Activated naive CD4-positive, alpha-beta T cell treated with anti-CD3 and anti-CD28 coated beads for 36 hours (primary cell): ENCODE measurements at regions of chr1 and their contacts with region 1.

Region 1: DNA sequence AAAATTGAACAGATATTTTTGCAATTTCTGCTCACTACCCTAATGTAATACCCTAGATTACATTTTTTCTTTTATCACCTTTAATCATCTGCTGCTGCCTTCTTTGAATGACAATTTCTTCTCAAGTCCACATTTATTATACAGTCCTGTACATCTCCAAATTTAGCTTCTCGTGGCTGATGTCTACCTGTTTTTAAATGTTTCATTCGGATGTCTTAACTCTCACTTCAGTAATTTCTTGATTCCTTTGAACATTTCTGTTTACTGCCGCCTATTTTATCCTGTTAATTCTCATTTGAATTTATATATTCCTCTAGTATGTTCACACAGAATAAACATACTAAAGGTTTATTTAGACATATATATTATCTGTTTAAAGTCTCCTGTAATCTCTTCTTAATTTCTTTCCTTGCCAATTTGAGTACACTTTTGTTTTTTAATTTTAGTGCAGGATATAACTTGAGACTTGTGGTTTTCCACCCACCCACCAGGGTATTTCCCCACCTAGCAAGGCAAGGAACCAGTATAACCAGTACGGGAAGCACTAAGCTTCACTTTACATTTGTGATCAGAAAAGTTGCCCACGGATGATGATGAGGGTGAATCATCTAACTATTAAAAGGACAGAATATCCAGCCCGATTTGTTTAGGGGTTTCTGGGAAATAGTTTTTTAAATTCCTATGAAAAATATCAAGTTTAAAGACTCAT is 12.7 kb downstream of the INSL5 start:
- DNase-seq: peak; percentile 81
- H3K4me3 Mint-ChIP-seq: peak overlapping the region; percentile 51
- H3K27ac Mint-ChIP-seq: peak overlapping the region; percentile 50
- H3K4me1 Mint-ChIP-seq: peaks cover 30% of the 10 kb centered on the region
- H3K27me3 Mint-ChIP-seq: no peaks in the 10 kb centered on the region

Region 2: GRCh38 chr1:66732407-66733166 is 55.8 kb before region 1 on chr1:
- CTCF ChIA-PET with region 1: no interaction called
- intact Hi-C with region 1: loop called (anchors 2 kb)
- DNase-seq: no peak
- H3K4me3 Mint-ChIP-seq: no peak overlapping the region
- H3K27ac Mint-ChIP-seq: no peak overlapping the region
- H3K4me1 Mint-ChIP-seq: peaks cover 23% of the 10 kb centered on the region
- H3K27me3 Mint-ChIP-seq: no peaks in the 10 kb centered on the region

Region 3: GRCh38 chr1:66924756-66925557 is 136.6 kb after region 1 on chr1 and contains the starts of genes DNAI4 and MIER1:
- CTCF ChIA-PET with region 1: interaction called, 4 read pairs
- intact Hi-C with region 1: loop called (anchors 1 kb)
- DNase-seq: peak; percentile 98
- H3K4me3 Mint-ChIP-seq: peak within 1 kb of the TSS; percentile 92
- H3K27ac Mint-ChIP-seq: peak within 1 kb of the TSS; percentile 95
- H3K4me1 Mint-ChIP-seq: peaks cover 50% of the 10 kb centered on the region
- H3K27me3 Mint-ChIP-seq: no peaks in the 10 kb centered on the region
- total RNA-seq, gene DNAI4: 0.83 to 1.5 TPM
- total RNA-seq, gene MIER1: 56.5 to 58.3 TPM

Region 4: DNA sequence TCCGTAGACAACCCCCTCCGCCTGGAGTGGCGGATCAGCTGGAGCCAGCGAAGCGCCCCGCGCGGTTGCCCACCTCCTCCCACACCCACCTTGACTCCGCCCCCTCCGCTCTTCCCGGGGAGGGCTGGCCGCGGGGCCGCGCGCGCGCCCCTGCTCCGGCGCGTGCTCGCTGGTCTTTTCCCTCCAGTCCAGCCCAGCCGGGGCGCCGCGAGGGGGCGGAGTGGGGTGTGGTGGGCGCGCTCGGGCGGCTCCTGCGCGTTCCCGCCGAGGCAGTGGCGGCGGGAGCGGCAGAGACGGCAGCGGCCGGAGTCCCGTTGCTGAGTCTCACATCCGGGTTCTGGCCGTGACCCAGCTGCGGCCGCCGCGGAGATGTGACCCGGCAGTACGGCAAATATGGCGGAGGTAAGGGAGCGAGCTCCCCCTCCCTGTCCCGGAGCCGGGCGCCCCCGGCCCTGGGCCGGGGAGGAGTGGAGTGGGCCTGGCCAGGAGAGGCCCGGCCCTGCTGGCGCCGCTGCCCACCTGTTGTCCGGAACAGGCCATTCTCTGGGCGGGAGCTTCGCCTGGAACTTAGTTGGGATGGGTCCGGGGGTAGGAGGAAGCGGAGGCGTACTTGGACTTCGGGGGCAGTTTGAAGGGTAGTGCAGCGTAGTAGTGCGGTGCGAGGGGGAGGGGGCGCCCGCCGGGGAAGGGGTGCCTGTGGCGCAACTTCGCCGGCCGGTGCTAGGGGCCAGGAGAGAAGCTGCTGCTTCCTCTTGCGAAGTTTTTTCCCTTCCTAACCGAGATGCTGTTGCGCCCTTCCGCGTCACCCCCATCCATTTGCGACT is 141.8 kb after region 1 on chr1:
- CTCF ChIA-PET with region 1: interaction called, 4 read pairs
- intact Hi-C with region 1: loop called (anchors 1 kb)
- DNase-seq: peak; percentile 92
- H3K4me3 Mint-ChIP-seq: peak overlapping the region; percentile 84
- H3K27ac Mint-ChIP-seq: peak overlapping the region; percentile 92
- H3K4me1 Mint-ChIP-seq: peaks cover 51% of the 10 kb centered on the region
- H3K27me3 Mint-ChIP-seq: no peaks in the 10 kb centered on the region

Region 5: GRCh38 chr1:67162957-67163356 is 374.6 kb after region 1 on chr1:
- CTCF ChIA-PET with region 1: no interaction called
- intact Hi-C with region 1: loop called (anchors 1 kb)
- DNase-seq: peak; percentile 76
- H3K4me3 Mint-ChIP-seq: peak overlapping the region; percentile 42
- H3K27ac Mint-ChIP-seq: peak overlapping the region; percentile 83
- H3K4me1 Mint-ChIP-seq: peaks cover 63% of the 10 kb centered on the region
- H3K27me3 Mint-ChIP-seq: no peaks in the 10 kb centered on the region